OCI-LY7 (cell line): ENCODE measurements at regions of chr1 and their contacts with region 1.

Region 1: GRCh38 chr1:26315874-26316850 is 1.6 kb upstream of the CD52 start:
- DNase-seq: peak; percentile 57
- H3K4me3 ChIP-seq: peak overlapping the region; percentile 93
- H3K27ac ChIP-seq: peak overlapping the region; percentile 91
- H3K4me1 ChIP-seq: peaks cover 71% of the 10 kb centered on the region
- CTCF ChIP-seq: no peak

Region 2: GRCh38 chr1:26300586-26301275 is 15.4 kb before region 1 on chr1:
- CTCF ChIA-PET with region 1: interaction called, 4 read pairs
- POLR2A ChIA-PET with region 1: interaction called, 13 read pairs
- intact Hi-C with region 1: no loop called
- DNase-seq: no peak
- H3K4me3 ChIP-seq: no peak overlapping the region
- H3K27ac ChIP-seq: peak overlapping the region; percentile 72
- H3K4me1 ChIP-seq: peaks cover 69% of the 10 kb centered on the region
- CTCF ChIP-seq: no peak